ENCODE measurements at regions of chr2 and their contacts with region 1.

Region 1: GRCh38 chr2:1550658-1551316 is 137.5 kb downstream of the TPO start:
- H3K4me3 Mint-ChIP-seq: no peak overlapping the region
- H3K27ac Mint-ChIP-seq: no peak overlapping the region
- H3K4me1 Mint-ChIP-seq: no peaks in the 10 kb centered on the region
- H3K27me3 Mint-ChIP-seq: peaks cover 11% of the 10 kb centered on the region

Region 2: GRCh38 chr2:714005-714741 is 836.6 kb before region 1 on chr2:
- intact Hi-C with region 1: loop called (anchors 2 kb)
- H3K4me3 Mint-ChIP-seq: no peak overlapping the region
- H3K27ac Mint-ChIP-seq: no peak overlapping the region
- H3K4me1 Mint-ChIP-seq: no peaks in the 10 kb centered on the region
- H3K27me3 Mint-ChIP-seq: peaks cover 4% of the 10 kb centered on the region

Region 3: GRCh38 chr2:950080-950966 is 600.5 kb before region 1 on chr2 and contains the start of gene SNTG2:
- intact Hi-C with region 1: loop called (anchors 5 kb)
- H3K4me3 Mint-ChIP-seq: peak within 1 kb of the TSS; percentile 17
- H3K27ac Mint-ChIP-seq: no peak within 1 kb of the TSS
- H3K4me1 Mint-ChIP-seq: no peaks in the 10 kb centered on the region
- H3K27me3 Mint-ChIP-seq: peaks cover 44% of the 10 kb centered on the region

Measured in dendritic cell treated with granulocyte-macrophage colony-stimulating factor and Interleukin-4, amounts not matched to agents 40 ng/mL and 50 ng/mL, for 4 days (primary cell).